Heart right ventricle (tissue), 16 donors: ENCODE measurements at regions of chr12 and their contacts with region 1.

Region 1: GRCh38 chr12:52903285-52903854 is 1.5 kb downstream of the KRT8 start:
- DNase-seq: peak; percentile 74 to 79
- ATAC-seq: peak; percentile 91 to 97 (median 92)
- H3K4me3 ChIP-seq: peak overlapping the region; percentile 10 to 58 (median 54)
- H3K27ac ChIP-seq: peak overlapping the region in 8 of 10 donors; percentile 3 to 75 (median 70)
- H3K4me1 ChIP-seq: peaks cover 0 to 25% (median 0%) of the 10 kb centered on the region in 9 donors
- H3K27me3 ChIP-seq: peaks cover 0 to 5% (median 0%) of the 10 kb centered on the region in 7 donors
- CTCF ChIP-seq: no peak

Region 2: DNA sequence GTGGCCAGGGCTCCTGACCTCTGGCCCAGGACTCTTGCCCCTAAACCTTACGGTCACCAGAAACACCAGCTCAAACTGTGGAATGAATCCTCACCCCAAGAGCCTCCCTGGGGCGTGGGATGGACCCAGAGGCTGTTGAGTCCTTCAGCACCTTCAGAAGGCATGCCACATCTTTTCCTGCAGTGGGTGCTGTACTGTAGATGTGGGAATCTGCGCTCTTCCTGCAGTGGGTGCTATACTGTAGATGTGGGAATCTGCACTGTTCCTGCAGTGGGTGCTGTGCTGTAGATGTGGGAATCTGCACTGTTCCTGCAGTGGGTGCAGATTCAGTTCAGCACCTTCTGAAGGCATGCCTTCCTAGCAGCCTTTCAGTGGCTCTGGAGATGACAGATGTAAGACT is 498.4 kb before region 1 on chr12:
- intact Hi-C with region 1: no loop called
- DNase-seq: no peak
- ATAC-seq: no peak
- H3K4me3 ChIP-seq: no peak overlapping the region
- H3K27ac ChIP-seq: no peak overlapping the region
- H3K4me1 ChIP-seq: no peaks in the 10 kb centered on the region
- H3K27me3 ChIP-seq: peaks cover 0 to 35% (median 0%) of the 10 kb centered on the region in 7 donors
- CTCF ChIP-seq: no peak

Region 3: GRCh38 chr12:52965333-52965724 is 62.0 kb after region 1 on chr12:
- intact Hi-C with region 1: no loop called
- DNase-seq: no peak
- ATAC-seq: peak in 6 of 8 donors; percentile 24 to 73 (median 46)
- H3K4me3 ChIP-seq: peak overlapping the region in 8 of 10 donors; percentile 8 to 47 (median 36)
- H3K27ac ChIP-seq: peak overlapping the region in 1 of 10 donors; percentile 41
- H3K4me1 ChIP-seq: peaks cover 0 to 13% (median 0%) of the 10 kb centered on the region in 9 donors
- H3K27me3 ChIP-seq: peaks cover 0 to 45% (median 24%) of the 10 kb centered on the region in 7 donors
- CTCF ChIP-seq: no peak

Region 4: GRCh38 chr12:52980693-52981423 is 77.5 kb after region 1 on chr12:
- intact Hi-C with region 1: loop called in 1 of 10 experiments (anchors 5 kb)
- DNase-seq: peak; percentile 82 to 92
- ATAC-seq: peak; percentile 89 to 97 (median 93)
- H3K4me3 ChIP-seq: no peak overlapping the region
- H3K27ac ChIP-seq: no peak overlapping the region
- H3K4me1 ChIP-seq: no peaks in the 10 kb centered on the region
- H3K27me3 ChIP-seq: peaks cover 0 to 32% (median 11%) of the 10 kb centered on the region in 7 donors
- CTCF ChIP-seq: peak; percentile 90 to 100 (median 97)